ENCODE measurements at regions of chr2 and their contacts with region 1.

Region 1: GRCh38 chr2:43484323-43484930 is 111.4 kb downstream of the THADA start:
- DNase-seq: peak in 4 of 5 donors; percentile 46 to 54 (median 52)
- H3K4me3 ChIP-seq: no peak overlapping the region
- H3K4me3 Mint-ChIP-seq: no peak overlapping the region
- H3K27ac ChIP-seq: no peak overlapping the region
- H3K27ac Mint-ChIP-seq: peak overlapping the region in 1 of 7 donors; percentile 22
- H3K4me1 ChIP-seq: peaks cover 4% of the 10 kb centered on the region
- H3K4me1 Mint-ChIP-seq: peaks cover 0 to 7% (median 4%) of the 10 kb centered on the region in 4 donors
- H3K27me3 ChIP-seq: no peaks in the 10 kb centered on the region
- H3K27me3 Mint-ChIP-seq: no peaks in the 10 kb centered on the region

Region 2: GRCh38 chr2:42828487-42829425 is 655.7 kb before region 1 on chr2:
- CTCF ChIA-PET with region 1: interaction called, 16 read pairs
- POLR2A ChIA-PET with region 1: no interaction called
- intact Hi-C with region 1: loop called (anchors 2 kb)
- DNase-seq: peak; percentile 59 to 68 (median 63)
- H3K4me3 ChIP-seq: no peak overlapping the region
- H3K4me3 Mint-ChIP-seq: peak overlapping the region in 5 of 8 donors; percentile 17 to 57 (median 31)
- H3K27ac ChIP-seq: no peak overlapping the region
- H3K27ac Mint-ChIP-seq: peak overlapping the region in 1 of 7 donors; percentile 58
- H3K4me1 ChIP-seq: peaks cover 13% of the 10 kb centered on the region
- H3K4me1 Mint-ChIP-seq: peaks cover 8 to 20% (median 17%) of the 10 kb centered on the region in 4 donors
- H3K27me3 ChIP-seq: no peaks in the 10 kb centered on the region
- H3K27me3 Mint-ChIP-seq: peaks cover 3 to 10% of the 10 kb centered on the region in 2 donors

Region 3: DNA sequence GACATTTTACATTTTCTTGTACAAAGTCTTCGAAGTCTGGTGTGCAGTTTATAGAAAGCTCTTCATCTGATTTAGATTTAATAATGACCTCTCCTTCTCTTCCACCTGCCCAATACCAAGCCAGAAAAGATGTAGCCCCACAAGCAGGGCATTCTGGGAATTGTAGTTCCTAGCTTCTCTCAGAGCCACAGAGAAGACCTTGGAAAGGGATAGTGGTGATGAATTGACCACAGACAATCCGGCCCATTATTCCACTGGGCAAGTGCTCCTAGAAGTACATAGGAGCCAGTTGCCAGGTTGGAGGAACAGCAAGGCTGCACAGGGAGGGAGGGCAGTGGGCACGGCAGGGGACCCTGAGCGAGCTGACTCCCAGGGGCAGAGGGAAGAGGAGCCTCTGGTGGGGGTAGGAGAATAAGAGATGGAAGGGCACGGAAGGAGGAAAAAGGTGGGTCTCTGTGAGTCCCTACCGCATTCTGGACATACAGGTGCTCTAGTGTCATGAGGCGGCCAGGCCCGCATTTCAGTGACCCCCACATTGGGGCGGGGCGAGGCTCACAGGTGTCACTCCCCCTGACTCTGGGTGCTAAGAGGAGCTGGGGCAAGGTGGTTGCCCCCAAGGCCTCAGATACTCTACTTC is 539.5 kb before region 1 on chr2:
- CTCF ChIA-PET with region 1: interaction called, 86 read pairs
- POLR2A ChIA-PET with region 1: no interaction called
- intact Hi-C with region 1: loop called (anchors 1 kb)
- DNase-seq: no peak
- H3K4me3 ChIP-seq: no peak overlapping the region
- H3K4me3 Mint-ChIP-seq: no peak overlapping the region
- H3K27ac ChIP-seq: no peak overlapping the region
- H3K27ac Mint-ChIP-seq: no peak overlapping the region
- H3K4me1 ChIP-seq: no peaks in the 10 kb centered on the region
- H3K4me1 Mint-ChIP-seq: peaks cover 0 to 2% (median under 1%) of the 10 kb centered on the region in 4 donors
- H3K27me3 ChIP-seq: no peaks in the 10 kb centered on the region
- H3K27me3 Mint-ChIP-seq: no peaks in the 10 kb centered on the region

Region 4: GRCh38 chr2:43024515-43025011 is 459.9 kb before region 1 on chr2:
- CTCF ChIA-PET with region 1: interaction called, 10 read pairs
- POLR2A ChIA-PET with region 1: no interaction called
- intact Hi-C with region 1: loop called (anchors 5 kb)
- DNase-seq: peak in 3 of 5 donors; percentile 7 to 20 (median 17)
- H3K4me3 ChIP-seq: no peak overlapping the region
- H3K4me3 Mint-ChIP-seq: no peak overlapping the region
- H3K27ac ChIP-seq: no peak overlapping the region
- H3K27ac Mint-ChIP-seq: peak overlapping the region in 3 of 7 donors; percentile 29 to 57 (median 53)
- H3K4me1 ChIP-seq: peaks cover 3% of the 10 kb centered on the region
- H3K4me1 Mint-ChIP-seq: peaks cover 4 to 10% (median 7%) of the 10 kb centered on the region in 4 donors
- H3K27me3 ChIP-seq: no peaks in the 10 kb centered on the region
- H3K27me3 Mint-ChIP-seq: no peaks in the 10 kb centered on the region

Region 5: GRCh38 chr2:43239981-43240761 is 244.3 kb before region 1 on chr2:
- CTCF ChIA-PET with region 1: interaction called, 4 read pairs
- POLR2A ChIA-PET with region 1: no interaction called
- intact Hi-C with region 1: loop called (anchors 5 kb)
- DNase-seq: no peak
- H3K4me3 ChIP-seq: no peak overlapping the region
- H3K4me3 Mint-ChIP-seq: no peak overlapping the region
- H3K27ac ChIP-seq: no peak overlapping the region
- H3K27ac Mint-ChIP-seq: peak overlapping the region in 5 of 7 donors; percentile 4 to 52 (median 29)
- H3K4me1 ChIP-seq: peaks cover 5% of the 10 kb centered on the region
- H3K4me1 Mint-ChIP-seq: peaks cover 11 to 22% (median 16%) of the 10 kb centered on the region in 4 donors
- H3K27me3 ChIP-seq: no peaks in the 10 kb centered on the region
- H3K27me3 Mint-ChIP-seq: no peaks in the 10 kb centered on the region

Region 6: DNA sequence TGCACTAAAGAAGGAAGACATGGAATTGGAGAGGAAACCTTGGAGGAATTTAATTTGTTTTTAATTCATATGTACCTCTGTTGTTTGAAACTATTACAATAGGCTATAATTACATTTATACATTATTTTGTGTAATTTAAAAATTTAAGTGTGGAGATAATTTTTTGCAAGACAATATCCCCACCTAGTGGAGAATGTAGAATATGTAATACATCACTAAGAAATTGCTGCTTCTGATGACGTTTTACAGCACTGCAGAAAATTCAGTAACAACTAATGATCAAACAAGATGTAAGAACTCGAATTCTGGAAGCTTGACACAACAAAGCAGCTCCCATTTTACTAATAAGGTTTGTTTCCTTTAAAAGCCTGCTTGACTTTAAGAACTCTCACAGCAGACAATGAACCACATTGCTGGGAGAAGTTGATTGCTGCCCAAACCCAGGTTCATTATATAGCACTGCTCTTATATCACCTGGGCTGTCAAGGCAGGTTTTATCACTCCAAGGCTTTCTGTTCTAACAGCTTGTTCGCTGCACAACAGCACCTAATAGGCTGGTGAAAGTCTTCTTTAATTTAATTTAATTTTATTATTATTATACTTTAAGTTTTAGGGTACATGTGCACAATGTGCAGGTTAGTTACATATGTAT is 58.0 kb after region 1 on chr2:
- CTCF ChIA-PET with region 1: interaction called, 15 read pairs
- POLR2A ChIA-PET with region 1: no interaction called
- intact Hi-C with region 1: no loop called
- DNase-seq: peak; percentile 9 to 62 (median 54)
- H3K4me3 ChIP-seq: no peak overlapping the region
- H3K4me3 Mint-ChIP-seq: no peak overlapping the region
- H3K27ac ChIP-seq: no peak overlapping the region
- H3K27ac Mint-ChIP-seq: no peak overlapping the region
- H3K4me1 ChIP-seq: peaks cover 9% of the 10 kb centered on the region
- H3K4me1 Mint-ChIP-seq: peaks cover 5 to 10% (median 9%) of the 10 kb centered on the region in 4 donors
- H3K27me3 ChIP-seq: no peaks in the 10 kb centered on the region
- H3K27me3 Mint-ChIP-seq: no peaks in the 10 kb centered on the region

Region 7: GRCh38 chr2:43848214-43848613 is 363.8 kb after region 1 on chr2:
- CTCF ChIA-PET with region 1: no interaction called
- POLR2A ChIA-PET with region 1: no interaction called
- intact Hi-C with region 1: no loop called
- DNase-seq: no peak
- H3K4me3 ChIP-seq: no peak overlapping the region
- H3K4me3 Mint-ChIP-seq: no peak overlapping the region
- H3K27ac ChIP-seq: no peak overlapping the region
- H3K27ac Mint-ChIP-seq: no peak overlapping the region
- H3K4me1 ChIP-seq: no peaks in the 10 kb centered on the region
- H3K4me1 Mint-ChIP-seq: no peaks in the 10 kb centered on the region
- H3K27me3 ChIP-seq: no peaks in the 10 kb centered on the region
- H3K27me3 Mint-ChIP-seq: peaks cover 10 to 15% of the 10 kb centered on the region in 2 donors